ENCODE measurements at regions of chr5 and their contacts with region 1.

Region 1: GRCh38 chr5:77015938-77016569 is 14.2 kb upstream of the AGGF1 start:
- DNase-seq: no peak
- ATAC-seq: peak; percentile 30
- H3K4me3 Mint-ChIP-seq: no peak overlapping the region
- H3K27ac Mint-ChIP-seq: no peak overlapping the region
- H3K4me1 Mint-ChIP-seq: peaks cover 22% of the 10 kb centered on the region
- H3K27me3 Mint-ChIP-seq: peaks cover 24% of the 10 kb centered on the region

Region 2: GRCh38 chr5:76867827-76868693 is 148.0 kb before region 1 on chr5:
- CTCF ChIA-PET with region 1: interaction called, 50 read pairs
- DNase-seq: peak; percentile 76
- ATAC-seq: peak; percentile 73
- H3K4me3 Mint-ChIP-seq: no peak overlapping the region
- H3K27ac Mint-ChIP-seq: no peak overlapping the region
- H3K4me1 Mint-ChIP-seq: peaks cover 4% of the 10 kb centered on the region
- H3K27me3 Mint-ChIP-seq: no peaks in the 10 kb centered on the region

Region 3: DNA sequence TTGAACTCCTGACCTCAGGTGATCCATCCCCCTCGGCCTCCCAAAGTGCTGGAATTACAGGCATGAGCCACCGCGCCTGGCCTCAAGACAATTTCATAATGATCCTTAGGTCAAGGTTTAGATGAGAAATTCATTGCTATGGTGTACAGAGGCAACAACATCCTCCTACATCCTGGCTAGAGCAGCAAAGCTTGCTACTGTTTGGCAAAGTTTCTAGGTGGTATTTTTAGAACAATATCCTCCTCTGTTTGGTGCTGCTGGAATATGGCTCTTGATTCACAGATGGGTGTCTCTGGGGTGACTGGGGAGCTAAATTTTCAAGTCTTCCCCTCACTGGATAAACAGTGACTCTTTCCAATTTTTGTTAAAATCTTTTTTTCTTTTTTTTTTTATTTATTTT is 32.6 kb before region 1 on chr5:
- CTCF ChIA-PET with region 1: no interaction called
- DNase-seq: no peak
- ATAC-seq: no peak
- H3K4me3 Mint-ChIP-seq: no peak overlapping the region
- H3K27ac Mint-ChIP-seq: no peak overlapping the region
- H3K4me1 Mint-ChIP-seq: no peaks in the 10 kb centered on the region
- H3K27me3 Mint-ChIP-seq: peaks cover 17% of the 10 kb centered on the region

Region 4: DNA sequence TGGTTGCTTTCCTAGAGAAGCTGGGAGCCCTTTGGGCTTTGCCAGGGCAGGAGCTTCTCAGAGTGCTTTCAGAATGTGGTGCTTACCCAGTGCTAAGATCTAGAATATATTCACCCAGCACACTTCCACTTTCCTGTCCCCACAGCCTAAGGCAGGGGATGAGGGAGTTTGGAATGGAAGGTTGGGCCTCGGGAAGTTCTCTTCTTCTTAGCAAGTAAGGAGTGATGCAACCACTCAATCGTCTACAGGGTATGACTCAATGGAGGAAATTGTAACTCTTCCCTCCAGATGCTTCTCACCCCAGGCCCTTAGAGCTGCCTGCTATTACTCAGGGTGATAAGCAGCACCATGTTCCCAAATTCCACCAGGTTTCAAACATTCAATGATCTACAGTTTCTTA is 16.6 kb before region 1 on chr5:
- CTCF ChIA-PET with region 1: no interaction called
- DNase-seq: no peak
- ATAC-seq: no peak
- H3K4me3 Mint-ChIP-seq: no peak overlapping the region
- H3K27ac Mint-ChIP-seq: no peak overlapping the region
- H3K4me1 Mint-ChIP-seq: peaks cover 2% of the 10 kb centered on the region
- H3K27me3 Mint-ChIP-seq: peaks cover 47% of the 10 kb centered on the region

Region 5: DNA sequence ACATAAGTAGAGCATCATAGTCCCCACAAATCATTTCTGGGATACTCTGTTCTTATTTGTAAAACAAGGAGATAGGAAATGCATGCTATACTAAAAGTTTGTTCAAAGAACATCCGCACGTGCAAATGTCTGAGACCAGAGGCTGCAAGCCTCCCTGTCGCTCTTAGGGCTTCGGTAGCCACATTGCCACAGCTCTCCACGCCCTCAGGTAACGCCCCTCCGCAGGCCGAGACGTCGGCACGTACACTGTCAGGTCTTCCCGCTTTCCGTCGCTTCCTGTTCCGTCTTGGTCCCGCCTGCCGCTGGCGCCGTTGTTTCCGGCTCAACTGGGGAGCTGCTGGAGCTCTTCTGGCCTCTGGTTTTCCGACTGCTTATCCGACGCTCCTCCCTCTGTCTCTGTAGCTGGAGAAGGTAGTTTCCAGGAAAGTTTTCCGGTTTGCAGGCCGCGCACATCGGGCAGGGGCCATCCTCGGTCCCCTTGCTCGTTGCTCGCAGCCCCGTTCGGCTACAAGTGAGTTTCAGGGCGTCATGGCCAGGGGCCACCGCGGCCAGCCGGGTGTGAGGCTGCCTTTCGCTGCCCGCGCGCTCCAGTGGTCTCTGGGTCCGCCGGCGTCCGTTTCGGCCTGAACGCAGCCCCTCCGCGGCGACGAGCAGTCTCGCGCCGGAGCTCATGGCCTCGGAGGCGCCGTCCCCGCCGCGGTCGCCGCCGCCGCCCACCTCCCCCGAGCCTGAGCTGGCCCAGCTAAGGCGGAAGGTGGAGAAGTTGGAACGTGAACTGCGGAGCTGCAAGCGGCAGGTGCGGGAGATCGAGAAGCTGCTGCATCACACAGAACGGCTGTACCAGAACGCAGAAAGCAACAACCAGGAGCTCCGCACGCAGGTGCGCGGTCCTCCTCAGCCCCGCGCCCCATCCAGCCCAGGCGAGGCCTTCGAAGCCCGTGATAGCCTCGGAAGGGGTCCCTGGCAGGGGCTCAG is 14.3 kb after region 1 on chr5 and contains the start of gene AGGF1:
- CTCF ChIA-PET with region 1: interaction called, 12 read pairs
- DNase-seq: peak; percentile 96
- ATAC-seq: peak; percentile 98
- H3K4me3 Mint-ChIP-seq: peak within 1 kb of the TSS; percentile 97
- H3K27ac Mint-ChIP-seq: peak within 1 kb of the TSS; percentile 95
- H3K4me1 Mint-ChIP-seq: peaks cover 35% of the 10 kb centered on the region
- H3K27me3 Mint-ChIP-seq: no peaks in the 10 kb centered on the region
- total RNA-seq, gene AGGF1: 28.6 to 29.3 TPM

Region 6: GRCh38 chr5:77129391-77129990 is 113.4 kb after region 1 on chr5:
- CTCF ChIA-PET with region 1: no interaction called
- DNase-seq: no peak
- ATAC-seq: no peak
- H3K4me3 Mint-ChIP-seq: no peak overlapping the region
- H3K27ac Mint-ChIP-seq: no peak overlapping the region
- H3K4me1 Mint-ChIP-seq: no peaks in the 10 kb centered on the region
- H3K27me3 Mint-ChIP-seq: peaks cover 16% of the 10 kb centered on the region